Heart right ventricle (tissue), 16 donors: ENCODE measurements at regions of chr1 and their contacts with region 1.

Region 1: DNA sequence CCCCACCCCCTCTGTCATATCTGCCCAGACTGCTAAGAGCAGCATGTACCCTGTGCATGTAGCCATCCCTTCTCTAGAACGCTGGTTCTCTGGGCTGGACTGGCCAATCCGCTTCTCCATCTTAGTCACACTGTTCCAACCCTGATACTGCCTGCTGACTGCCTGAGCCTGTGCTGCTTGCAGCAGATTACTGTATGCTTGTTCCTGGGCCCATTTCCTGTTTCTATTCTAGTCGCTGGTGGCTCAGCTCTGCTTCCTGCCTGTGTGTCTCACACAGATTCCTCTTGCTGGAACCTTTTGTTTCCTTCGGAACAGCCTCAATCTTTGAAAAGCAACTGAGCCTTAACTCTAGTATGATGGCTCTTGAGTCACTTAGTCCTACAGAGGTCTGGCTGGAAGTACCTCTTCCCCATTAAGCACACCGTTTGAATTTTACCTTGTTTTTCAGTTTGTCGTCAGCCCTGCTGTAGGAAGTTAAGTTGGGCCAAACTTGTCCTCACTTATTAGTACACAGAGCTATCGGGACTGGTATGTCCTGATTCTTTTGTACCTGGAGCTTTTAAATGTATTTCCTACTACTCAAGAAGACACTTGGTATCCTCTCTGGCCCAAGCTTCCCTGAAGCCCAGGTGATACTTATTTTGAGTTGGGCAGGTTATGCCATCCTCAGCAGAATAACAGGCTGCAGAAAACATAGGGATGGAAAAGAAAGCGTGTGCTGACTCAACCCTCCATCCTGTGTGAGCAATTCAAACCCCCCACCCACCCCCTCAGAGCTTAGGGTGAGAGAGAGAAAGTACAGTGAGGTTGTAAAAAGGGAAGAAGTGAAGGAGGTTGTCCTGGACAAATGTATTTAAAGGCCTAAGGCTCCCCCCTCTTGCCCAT is 43.4 kb upstream of the PIGV start:
- DNase-seq: peak; percentile 56 to 92
- ATAC-seq: peak; percentile 93 to 98 (median 96)
- H3K4me3 ChIP-seq: peak overlapping the region in 5 of 10 donors; percentile 0 to 23 (median 15)
- H3K27ac ChIP-seq: peak overlapping the region; percentile 58 to 92 (median 78)
- H3K4me1 ChIP-seq: peaks cover 8 to 92% (median 88%) of the 10 kb centered on the region in 9 donors
- H3K27me3 ChIP-seq: no peaks in the 10 kb centered on the region
- CTCF ChIP-seq: no peak

Region 2: GRCh38 chr1:26684763-26685508 is 59.4 kb before region 1 on chr1:
- intact Hi-C with region 1: no loop called
- DNase-seq: no peak
- ATAC-seq: no peak
- H3K4me3 ChIP-seq: no peak overlapping the region
- H3K27ac ChIP-seq: no peak overlapping the region
- H3K4me1 ChIP-seq: peaks cover 0 to 16% (median 0%) of the 10 kb centered on the region in 9 donors
- H3K27me3 ChIP-seq: no peaks in the 10 kb centered on the region
- CTCF ChIP-seq: no peak

Region 3: GRCh38 chr1:26695356-26696118 is 48.8 kb before region 1 on chr1 and contains the start of gene ARID1A:
- intact Hi-C with region 1: loop called in 1 of 10 experiments (anchors 5 kb)
- DNase-seq: peak; percentile 95 to 97
- ATAC-seq: peak; percentile 71 to 82 (median 76)
- H3K4me3 ChIP-seq: peak within 1 kb of the TSS; percentile 72 to 96 (median 92)
- H3K27ac ChIP-seq: peak within 1 kb of the TSS; percentile 93 to 99 (median 98)
- H3K4me1 ChIP-seq: peaks cover 14 to 73% (median 52%) of the 10 kb centered on the region in 9 donors
- H3K27me3 ChIP-seq: no peaks in the 10 kb centered on the region
- CTCF ChIP-seq: peak in 4 of 9 donors; percentile 3 to 39 (median 20)
- total RNA-seq, gene ARID1A: 33.6 to 62.5 (median 45.7) TPM

Region 4: DNA sequence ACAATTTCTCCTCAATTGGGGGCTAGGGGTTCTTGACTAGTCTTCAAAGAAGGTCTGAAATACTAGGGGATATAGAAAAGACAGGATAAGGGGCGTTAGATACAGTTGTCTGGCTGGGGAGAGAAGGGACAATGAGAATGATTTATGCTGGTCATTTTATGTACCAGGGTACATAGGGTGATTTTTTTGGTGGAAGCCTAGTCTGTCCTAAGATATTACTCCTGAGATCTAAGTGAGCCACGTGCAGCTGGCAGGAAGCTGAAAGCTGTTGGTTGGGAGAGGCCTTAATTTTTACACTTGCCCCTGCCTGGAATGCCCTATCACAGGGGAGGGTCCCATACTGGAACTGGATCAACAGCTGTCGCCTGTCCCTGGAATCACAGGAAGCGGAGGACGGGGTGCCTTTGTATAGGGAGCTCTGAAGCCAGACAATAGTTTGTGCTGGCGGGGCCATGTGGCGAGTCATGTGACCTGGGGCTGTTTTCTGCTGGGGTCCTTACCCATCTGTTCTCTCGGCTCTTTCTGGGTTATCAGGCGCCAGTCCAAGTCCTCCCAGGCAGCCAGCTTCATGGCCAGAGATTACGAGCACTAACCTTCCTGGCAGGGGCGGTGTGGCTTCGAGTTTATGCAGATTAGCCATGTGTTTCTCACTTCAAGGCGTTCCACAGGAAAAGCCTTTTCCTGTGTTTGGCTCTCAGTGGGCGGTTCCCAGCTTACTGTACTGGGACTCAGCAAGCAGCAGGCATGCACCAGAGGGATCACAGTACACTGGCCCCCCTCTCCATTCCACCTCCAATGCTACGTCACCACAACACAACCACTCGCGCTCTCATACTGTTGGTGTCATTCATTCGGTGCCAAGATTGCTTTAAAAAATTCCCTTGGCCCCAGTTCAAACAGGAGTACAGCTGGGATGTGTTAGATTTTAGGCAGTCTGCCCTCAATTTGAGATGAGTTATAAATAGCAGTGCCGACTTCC is 21.0 kb before region 1 on chr1:
- intact Hi-C with region 1: loop called in 2 of 10 experiments (anchors 1 to 2 kb)
- DNase-seq: peak; percentile 74 to 95
- ATAC-seq: peak; percentile 97 to 99 (median 97)
- H3K4me3 ChIP-seq: peak overlapping the region in 6 of 10 donors; percentile 4 to 25 (median 7)
- H3K27ac ChIP-seq: peak overlapping the region in 9 of 10 donors; percentile 43 to 69 (median 62)
- H3K4me1 ChIP-seq: peaks cover 24 to 100% (median 94%) of the 10 kb centered on the region in 9 donors
- H3K27me3 ChIP-seq: no peaks in the 10 kb centered on the region
- CTCF ChIP-seq: peak in 1 of 9 donors; percentile 8